Tibial artery (tissue), 4 donors: ENCODE measurements at regions of chr1 and their contacts with region 1.

Region 1: GRCh38 chr1:31434171-31434871 is 21.3 kb downstream of the SERINC2 start:
- DNase-seq: peak in 1 of 2 donors; percentile 59
- H3K4me3 ChIP-seq: no peak overlapping the region
- H3K27ac ChIP-seq: no peak overlapping the region
- H3K4me1 ChIP-seq: no peaks in the 10 kb centered on the region
- H3K27me3 ChIP-seq: peaks cover 0 to 6% of the 10 kb centered on the region in 2 donors
- CTCF ChIP-seq: no peak

Region 2: DNA sequence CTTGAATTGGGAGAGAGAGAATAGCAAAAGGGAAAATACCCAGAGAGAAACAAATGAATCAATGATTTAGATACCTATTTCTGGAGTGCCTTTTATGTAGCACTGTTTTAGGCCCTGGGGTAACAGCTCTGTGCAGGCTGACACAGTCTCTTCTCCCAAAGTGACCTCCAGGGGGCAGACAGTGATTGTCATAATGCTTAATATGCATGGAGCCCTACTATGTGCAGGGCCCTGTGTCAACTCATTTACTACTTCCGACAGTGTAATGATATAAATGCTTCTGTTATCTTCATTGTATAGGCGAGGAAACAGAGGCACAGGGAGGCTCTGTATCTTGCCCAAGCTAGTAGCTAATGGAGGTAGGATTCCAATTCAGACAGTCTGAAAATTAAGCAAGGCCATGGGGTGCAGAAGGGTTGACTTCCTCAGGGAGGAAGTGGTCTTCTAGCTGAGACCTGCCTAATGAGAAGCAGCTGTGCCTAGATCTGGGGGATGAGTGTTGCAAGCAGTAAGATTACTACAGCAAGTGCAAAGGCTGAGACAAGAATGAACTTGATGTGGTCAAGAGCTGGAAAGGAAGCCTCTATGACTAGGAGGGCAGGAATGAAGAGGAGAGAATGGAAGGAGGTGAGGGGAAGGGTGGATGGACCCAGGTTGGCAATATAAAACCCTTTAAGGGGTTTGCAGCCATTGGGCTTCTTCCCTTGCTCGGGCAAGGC is 37.5 kb before region 1 on chr1:
- intact Hi-C with region 1: no loop called
- DNase-seq: no peak
- H3K4me3 ChIP-seq: no peak overlapping the region
- H3K27ac ChIP-seq: no peak overlapping the region
- H3K4me1 ChIP-seq: peaks cover 0 to 10% (median 4%) of the 10 kb centered on the region in 4 donors
- H3K27me3 ChIP-seq: no peaks in the 10 kb centered on the region
- CTCF ChIP-seq: no peak

Region 3: GRCh38 chr1:31548907-31549808 is 114.8 kb after region 1 on chr1:
- intact Hi-C with region 1: loop called (anchors 10 kb)
- DNase-seq: peak; percentile 88
- H3K4me3 ChIP-seq: peak overlapping the region in 1 of 2 donors; percentile 6
- H3K27ac ChIP-seq: no peak overlapping the region
- H3K4me1 ChIP-seq: peaks cover 0 to 16% (median 11%) of the 10 kb centered on the region in 4 donors
- H3K27me3 ChIP-seq: peaks cover 0 to 17% of the 10 kb centered on the region in 2 donors
- CTCF ChIP-seq: peak; percentile 91 to 93